ENCODE measurements at regions of chr19 and their contacts with region 1.

Region 1: DNA sequence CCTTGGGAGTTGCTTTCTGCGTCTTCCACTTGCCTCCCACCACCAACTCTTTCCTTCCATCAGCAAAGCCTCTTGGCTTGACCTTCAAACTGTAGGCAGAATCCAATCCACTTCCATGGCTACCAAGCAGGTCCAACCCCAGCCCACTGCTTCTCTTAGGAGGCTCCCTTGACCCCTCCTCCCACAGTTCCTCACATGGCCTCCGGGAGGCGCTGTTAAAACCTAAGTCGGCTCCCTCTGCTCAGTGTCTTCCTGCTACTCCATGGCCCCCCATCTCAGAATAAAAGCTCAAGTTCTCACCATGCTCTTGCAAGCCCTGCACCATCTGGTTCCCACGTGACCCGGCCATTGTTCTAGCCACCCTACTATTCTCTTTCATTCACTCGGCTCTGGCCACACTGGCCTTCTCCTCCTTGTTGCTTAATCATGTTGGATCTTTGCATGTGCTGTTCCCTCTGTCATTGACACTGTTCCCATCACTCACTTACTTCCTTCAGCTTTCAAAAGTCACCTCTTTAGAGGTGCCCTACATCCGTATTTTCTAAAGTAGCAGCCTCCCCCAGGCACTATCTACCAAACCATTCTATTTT is 7.5 kb downstream of the IZUMO2 start:
- DNase-seq: no peak
- H3K4me3 ChIP-seq: no peak overlapping the region
- H3K27ac ChIP-seq: no peak overlapping the region
- H3K4me1 ChIP-seq: no peaks in the 10 kb centered on the region
- H3K27me3 ChIP-seq: no peaks in the 10 kb centered on the region
- CTCF ChIP-seq: no peak

Region 2: GRCh38 chr19:50067575-50067974 is 88.0 kb before region 1 on chr19:
- CTCF ChIA-PET with region 1: no interaction called
- dilution Hi-C with region 1: loop called (anchors 5 kb)
- in situ Hi-C with region 1: no loop called
- intact Hi-C with region 1: no loop called
- DNase-seq: no peak
- H3K4me3 ChIP-seq: no peak overlapping the region
- H3K27ac ChIP-seq: no peak overlapping the region
- H3K4me1 ChIP-seq: no peaks in the 10 kb centered on the region
- H3K27me3 ChIP-seq: no peaks in the 10 kb centered on the region
- CTCF ChIP-seq: no peak

Region 3: DNA sequence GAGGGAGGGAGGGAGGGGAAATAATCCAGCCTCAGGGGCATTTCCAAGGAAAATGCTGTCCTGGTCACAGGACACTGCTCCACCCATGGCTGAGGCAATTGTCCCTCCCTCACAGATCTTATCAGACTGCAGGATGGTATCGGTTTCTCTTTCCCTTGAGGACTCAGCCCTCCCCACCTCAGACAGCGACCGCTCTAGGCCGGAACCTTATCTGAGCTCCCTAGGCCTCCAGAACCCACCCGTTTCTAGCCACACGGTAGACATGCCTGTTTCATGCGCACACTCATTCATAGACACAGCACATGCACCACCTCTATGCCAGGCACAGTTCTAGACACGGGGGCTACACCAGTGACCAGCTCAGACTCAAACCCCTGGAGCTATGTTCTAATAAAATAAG is 17.5 kb after region 1 on chr19:
- CTCF ChIA-PET with region 1: no interaction called
- dilution Hi-C with region 1: no loop called
- in situ Hi-C with region 1: no loop called
- intact Hi-C with region 1: no loop called
- DNase-seq: no peak
- H3K4me3 ChIP-seq: no peak overlapping the region
- H3K27ac ChIP-seq: no peak overlapping the region
- H3K4me1 ChIP-seq: no peaks in the 10 kb centered on the region
- H3K27me3 ChIP-seq: no peaks in the 10 kb centered on the region
- CTCF ChIP-seq: no peak

Region 4: DNA sequence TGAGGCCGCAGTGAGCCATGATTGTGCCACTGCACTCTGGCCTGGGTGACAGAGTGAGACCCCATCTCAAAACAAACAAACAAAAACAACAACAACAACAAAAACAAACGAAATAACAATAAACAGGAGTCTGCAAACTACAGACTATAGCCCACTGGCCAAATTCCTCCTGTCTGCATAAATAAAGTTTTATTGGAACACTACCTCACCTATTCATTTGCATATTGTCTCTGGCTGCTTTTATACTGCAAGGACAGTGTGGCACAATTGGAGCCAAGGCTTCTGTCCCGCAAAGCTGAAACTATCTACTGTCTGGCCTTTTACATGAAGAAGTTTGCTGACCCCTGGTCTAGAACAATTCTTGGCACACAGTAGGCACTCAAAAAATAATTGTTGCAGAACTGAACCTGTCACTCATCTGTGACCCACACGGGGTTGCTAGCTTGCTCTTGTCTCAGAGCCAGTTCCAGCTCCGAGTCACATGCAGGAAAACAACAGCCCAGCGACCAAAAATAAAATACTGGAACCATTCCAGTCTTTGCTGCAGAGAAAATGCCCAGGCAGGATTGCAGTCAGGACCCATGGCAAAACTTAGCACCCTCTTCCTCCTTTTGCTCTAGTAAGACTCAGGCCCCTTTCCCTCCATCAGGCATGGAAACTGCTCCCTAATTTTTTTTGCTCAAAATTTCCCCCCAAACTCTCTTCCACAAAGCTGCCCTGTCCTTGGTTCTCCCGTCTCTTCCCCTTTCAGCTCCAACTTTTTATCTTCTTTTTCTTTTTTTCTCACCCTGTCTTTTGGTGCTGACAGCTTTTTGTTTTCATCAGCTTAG is 43.0 kb after region 1 on chr19:
- CTCF ChIA-PET with region 1: no interaction called
- dilution Hi-C with region 1: loop called (anchors 5 kb)
- in situ Hi-C with region 1: no loop called
- intact Hi-C with region 1: no loop called
- DNase-seq: no peak
- H3K4me3 ChIP-seq: no peak overlapping the region
- H3K27ac ChIP-seq: no peak overlapping the region
- H3K4me1 ChIP-seq: no peaks in the 10 kb centered on the region
- H3K27me3 ChIP-seq: no peaks in the 10 kb centered on the region
- CTCF ChIP-seq: no peak

Region 5: GRCh38 chr19:50230379-50231351 is 75.0 kb after region 1 on chr19:
- CTCF ChIA-PET with region 1: no interaction called
- dilution Hi-C with region 1: no loop called
- in situ Hi-C with region 1: no loop called
- intact Hi-C with region 1: no loop called
- DNase-seq: no peak
- H3K4me3 ChIP-seq: no peak overlapping the region
- H3K27ac ChIP-seq: no peak overlapping the region
- H3K4me1 ChIP-seq: no peaks in the 10 kb centered on the region
- H3K27me3 ChIP-seq: no peaks in the 10 kb centered on the region
- CTCF ChIP-seq: no peak

Region 6: DNA sequence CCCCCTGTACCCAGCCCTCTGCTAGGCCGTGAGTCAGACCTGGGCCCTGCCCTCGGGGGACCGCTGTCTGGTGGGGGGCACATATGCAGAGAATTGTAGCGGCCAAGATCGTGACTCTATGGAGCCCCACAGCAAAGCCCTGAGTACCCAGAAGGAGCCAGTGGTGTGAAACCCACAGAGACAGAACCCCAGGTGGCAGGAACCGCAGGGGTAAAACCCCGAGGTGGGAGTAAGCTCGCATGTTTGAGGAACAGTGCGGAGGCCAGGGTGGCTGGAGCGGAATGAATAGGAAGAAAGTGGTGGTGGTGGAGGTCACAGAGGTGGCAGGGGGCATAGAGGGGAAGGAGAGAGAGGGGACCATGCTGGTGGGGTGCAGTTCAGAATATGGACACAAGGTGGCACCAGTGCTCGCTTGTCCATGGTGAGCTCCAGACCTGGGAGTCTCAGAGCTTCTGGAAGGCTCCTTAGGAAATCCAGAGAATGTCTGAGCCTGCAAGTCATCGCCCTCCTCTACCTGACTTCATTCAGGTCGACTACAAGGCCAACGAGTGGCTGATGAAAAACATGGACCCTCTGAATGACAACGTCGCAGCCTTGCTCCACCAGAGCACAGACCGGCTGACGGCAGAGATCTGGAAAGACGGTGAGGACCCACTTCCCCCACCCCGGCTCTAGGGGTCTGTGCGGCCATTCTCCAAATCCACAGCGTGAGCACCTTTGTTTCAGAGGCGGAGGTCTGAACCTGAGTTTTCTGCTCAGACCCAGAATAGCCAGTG is 96.7 kb after region 1 on chr19:
- CTCF ChIA-PET with region 1: no interaction called
- dilution Hi-C with region 1: no loop called
- in situ Hi-C with region 1: no loop called
- intact Hi-C with region 1: no loop called
- DNase-seq: no peak
- H3K4me3 ChIP-seq: no peak overlapping the region
- H3K27ac ChIP-seq: no peak overlapping the region
- H3K4me1 ChIP-seq: no peaks in the 10 kb centered on the region
- H3K27me3 ChIP-seq: no peaks in the 10 kb centered on the region
- CTCF ChIP-seq: peak; percentile 29 to 41